Mammary epithelial cell (primary cell): ENCODE measurements at regions of chr12 and their contacts with region 1.

Region 1: DNA sequence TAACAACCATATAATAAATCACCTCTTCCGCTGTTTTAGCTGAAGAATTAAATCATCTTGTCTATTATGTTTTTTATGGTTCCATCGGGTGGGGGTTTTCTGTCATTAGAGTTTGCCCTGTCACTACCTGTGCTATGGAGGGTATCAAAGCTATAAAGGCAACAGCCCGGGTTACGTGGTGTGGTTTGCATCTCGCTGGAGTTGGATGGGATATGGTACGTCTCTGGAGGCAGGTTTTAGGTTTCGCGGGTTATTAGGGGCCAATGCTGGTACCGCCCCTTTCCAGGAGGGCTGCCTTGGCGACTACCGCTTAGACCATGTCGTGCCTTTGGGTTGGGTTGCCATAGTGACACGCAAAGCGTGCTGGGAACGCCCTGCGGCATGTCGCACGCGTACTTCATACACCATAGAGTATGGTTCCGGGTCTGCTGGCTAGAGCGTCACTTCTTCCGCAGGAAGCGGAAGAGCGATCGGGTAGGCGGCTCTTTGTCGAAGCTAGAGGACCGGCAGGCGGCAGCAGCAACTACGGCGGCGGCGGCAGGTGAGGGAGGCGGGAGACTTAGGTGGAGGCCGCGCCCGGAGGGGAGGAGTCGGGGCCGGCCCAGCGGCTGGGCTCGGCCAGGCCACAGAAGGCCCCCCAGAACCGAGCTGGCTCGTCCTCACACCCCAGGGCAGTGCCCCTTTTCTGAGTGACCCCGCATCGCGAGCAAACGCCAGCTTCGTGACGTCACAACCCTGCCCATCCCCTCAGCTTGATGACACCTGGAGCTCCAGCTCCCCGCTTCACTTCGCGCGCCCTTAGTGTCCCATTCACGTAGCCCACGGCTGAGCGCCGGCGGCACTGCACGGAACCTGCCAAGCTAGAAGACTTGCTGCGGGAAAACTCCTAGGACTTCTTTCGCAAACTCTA is at the start of gene ZC3H10:
- DNase-seq: peak; percentile 99
- H3K4me3 ChIP-seq: peak within 1 kb of the TSS; percentile 57 to 80 (median 77)
- H3K27ac ChIP-seq: peak within 1 kb of the TSS; percentile 91
- H3K4me1 ChIP-seq: peaks cover 31% of the 10 kb centered on the region
- H3K27me3 ChIP-seq: no peaks in the 10 kb centered on the region
- CTCF ChIP-seq: peak; percentile 23 to 65
- total RNA-seq, gene ZC3H10: 2.7 TPM

Region 2: GRCh38 chr12:56041552-56042429 is 76.2 kb before region 1 on chr12 and contains the start of gene RPS26:
- CTCF ChIA-PET with region 1: no interaction called
- dilution Hi-C with region 1: no loop called
- in situ Hi-C with region 1: loop called (anchors 5 to 10 kb)
- intact Hi-C with region 1: loop called (anchors 1 kb)
- DNase-seq: peak; percentile 99
- H3K4me3 ChIP-seq: peak within 1 kb of the TSS; percentile 78 to 91 (median 86)
- H3K27ac ChIP-seq: peak within 1 kb of the TSS; percentile 91
- H3K4me1 ChIP-seq: peaks cover 19% of the 10 kb centered on the region
- H3K27me3 ChIP-seq: no peaks in the 10 kb centered on the region
- CTCF ChIP-seq: peak; percentile 16 to 54
- total RNA-seq, gene RPS26: 46.4 to 331 TPM

Region 3: GRCh38 chr12:56104109-56104814 is 13.8 kb before region 1 on chr12 and contains the start of gene PA2G4:
- CTCF ChIA-PET with region 1: no interaction called
- dilution Hi-C with region 1: no loop called
- in situ Hi-C with region 1: no loop called
- intact Hi-C with region 1: loop called (anchors 1 kb)
- DNase-seq: peak; percentile 100
- H3K4me3 ChIP-seq: peak within 1 kb of the TSS; percentile 73 to 89 (median 76)
- H3K27ac ChIP-seq: peak within 1 kb of the TSS; percentile 76
- H3K4me1 ChIP-seq: peaks cover 24% of the 10 kb centered on the region
- H3K27me3 ChIP-seq: no peaks in the 10 kb centered on the region
- CTCF ChIP-seq: no peak
- total RNA-seq, gene PA2G4: 127 to 221 TPM

Region 4: GRCh38 chr12:56158029-56158925 is 40.2 kb after region 1 on chr12 and contains the start of gene MYL6:
- CTCF ChIA-PET with region 1: no interaction called
- dilution Hi-C with region 1: no loop called
- in situ Hi-C with region 1: no loop called
- intact Hi-C with region 1: loop called (anchors 2 kb)
- DNase-seq: peak; percentile 95
- H3K4me3 ChIP-seq: peak within 1 kb of the TSS; percentile 72 to 92 (median 82)
- H3K27ac ChIP-seq: peak within 1 kb of the TSS; percentile 96
- H3K4me1 ChIP-seq: peaks cover 26% of the 10 kb centered on the region
- H3K27me3 ChIP-seq: no peaks in the 10 kb centered on the region
- CTCF ChIP-seq: no peak
- total RNA-seq, gene MYL6: 732 to 1,042 TPM

Region 5: GRCh38 chr12:56189176-56189917 is 71.3 kb after region 1 on chr12 and contains the start of gene SMARCC2:
- CTCF ChIA-PET with region 1: interaction called, 39 read pairs
- dilution Hi-C with region 1: no loop called
- in situ Hi-C with region 1: no loop called
- intact Hi-C with region 1: loop called (anchors 1 kb)
- DNase-seq: peak; percentile 75
- H3K4me3 ChIP-seq: peak within 1 kb of the TSS; percentile 69 to 88 (median 71)
- H3K27ac ChIP-seq: peak within 1 kb of the TSS; percentile 56
- H3K4me1 ChIP-seq: peaks cover 18% of the 10 kb centered on the region
- H3K27me3 ChIP-seq: no peaks in the 10 kb centered on the region
- CTCF ChIP-seq: peak; percentile 52 to 71
- total RNA-seq, gene SMARCC2: 28.7 to 61.6 TPM

Region 6: DNA sequence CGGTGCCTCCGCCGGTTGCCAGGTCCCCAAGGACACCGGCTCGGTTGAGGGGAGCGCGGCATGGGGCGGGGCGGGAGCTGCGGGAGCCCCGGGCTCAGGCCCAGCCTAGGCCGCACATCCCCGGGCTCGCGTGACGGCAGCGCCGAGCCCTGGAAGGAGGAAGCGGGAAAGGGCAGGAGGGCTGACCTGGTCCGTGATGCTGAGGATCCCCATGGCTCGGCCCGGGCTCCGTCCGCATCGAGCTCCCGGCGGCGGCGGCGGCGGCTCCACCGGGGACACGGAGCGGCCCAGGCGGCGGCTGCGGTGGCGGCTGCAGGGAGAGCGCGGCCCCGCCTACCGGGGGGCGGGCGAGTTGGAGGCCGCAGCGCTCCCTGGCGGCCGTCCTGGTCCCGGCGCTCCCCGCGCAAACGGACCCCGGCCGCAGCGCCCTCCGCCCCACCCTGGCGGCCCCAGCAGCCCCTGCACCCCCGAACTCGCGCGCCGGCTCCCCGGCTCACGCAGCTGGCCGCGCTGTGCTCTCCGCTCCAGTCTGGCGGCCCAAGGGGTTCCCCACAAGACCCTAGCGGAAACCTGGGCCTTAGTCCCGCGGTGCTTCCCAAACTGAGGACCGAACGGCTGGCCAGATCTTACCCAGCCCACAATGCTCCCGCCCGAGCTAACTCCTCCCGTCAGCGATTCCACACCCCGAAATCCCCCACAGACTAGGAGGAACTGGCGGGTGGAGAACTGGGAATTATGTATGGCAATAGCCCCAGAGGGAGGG is 140.2 kb after region 1 on chr12 and contains the start of gene ANKRD52:
- CTCF ChIA-PET with region 1: interaction called, 3 read pairs
- dilution Hi-C with region 1: no loop called
- in situ Hi-C with region 1: no loop called
- intact Hi-C with region 1: loop called (anchors 1 kb)
- DNase-seq: peak; percentile 72
- H3K4me3 ChIP-seq: peak within 1 kb of the TSS; percentile 64 to 80 (median 79)
- H3K27ac ChIP-seq: peak within 1 kb of the TSS; percentile 43
- H3K4me1 ChIP-seq: peaks cover 35% of the 10 kb centered on the region
- H3K27me3 ChIP-seq: no peaks in the 10 kb centered on the region
- CTCF ChIP-seq: peak; percentile 33 to 54
- total RNA-seq, gene ANKRD52: 22.8 to 45.2 TPM

Region 7: GRCh38 chr12:56468216-56469006 is 350.4 kb after region 1 on chr12 and contains the start of gene SPRYD4:
- CTCF ChIA-PET with region 1: no interaction called
- dilution Hi-C with region 1: no loop called
- in situ Hi-C with region 1: loop called in 1 of 2 experiments (anchors 10 kb)
- intact Hi-C with region 1: loop called (anchors 1 kb)
- DNase-seq: peak; percentile 88
- H3K4me3 ChIP-seq: peak within 1 kb of the TSS; percentile 58 to 97 (median 89)
- H3K27ac ChIP-seq: peak within 1 kb of the TSS; percentile 88
- H3K4me1 ChIP-seq: peaks cover 8% of the 10 kb centered on the region
- H3K27me3 ChIP-seq: no peaks in the 10 kb centered on the region
- CTCF ChIP-seq: peak; percentile 6 to 31
- total RNA-seq, gene SPRYD4: 3.0 to 3.5 TPM